Aorta (tissue), 5 donors: ENCODE measurements at regions of chr19 and their contacts with region 1.

Region 1: DNA sequence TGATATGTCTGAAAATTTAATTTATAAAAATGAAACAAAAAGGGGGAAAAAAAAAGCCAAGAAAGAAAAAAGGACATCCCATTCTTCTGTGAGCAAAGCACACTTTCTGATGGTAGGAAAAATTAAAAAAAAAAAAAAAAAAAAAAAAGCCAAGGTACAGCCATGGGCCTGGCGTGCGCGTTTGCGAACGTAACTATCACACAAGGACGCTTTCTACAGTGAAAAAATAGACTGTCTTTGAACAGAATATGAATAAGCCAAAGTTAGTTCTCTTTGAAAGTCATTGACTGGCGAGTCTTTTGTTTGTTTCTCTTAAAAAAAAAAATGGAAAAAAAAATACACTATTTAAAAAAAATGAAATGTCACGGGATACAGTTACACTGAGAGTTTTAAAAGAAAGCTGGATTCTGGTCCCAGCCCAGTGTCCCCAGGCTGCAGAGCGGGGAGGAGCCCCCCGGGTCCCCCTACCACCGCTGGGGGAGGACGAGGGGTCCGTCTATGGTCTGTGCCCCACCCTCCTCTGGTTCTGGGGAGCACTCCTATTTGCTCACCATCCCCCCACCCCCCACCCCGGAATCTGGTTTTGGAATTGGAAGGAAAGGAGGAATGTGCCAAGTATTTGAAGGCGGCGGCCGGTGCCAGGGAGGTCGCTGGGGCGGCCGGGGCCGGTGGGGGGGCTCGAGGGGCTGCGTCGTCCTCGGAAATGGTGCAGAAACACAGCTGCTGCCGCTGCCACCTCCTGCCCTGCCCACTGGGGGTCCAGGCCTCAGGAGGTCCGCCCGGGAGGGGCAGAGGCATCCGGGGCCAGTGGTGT is 134.5 kb downstream of the PTPRS start:
- DNase-seq: no peak
- ATAC-seq: no peak
- H3K4me3 ChIP-seq: no peak overlapping the region
- H3K27ac ChIP-seq: no peak overlapping the region
- H3K4me1 ChIP-seq: no peaks in the 10 kb centered on the region
- H3K27me3 ChIP-seq: no peaks in the 10 kb centered on the region

Region 2: GRCh38 chr19:5091018-5091683 is 115.0 kb before region 1 on chr19:
- intact Hi-C with region 1: no loop called
- DNase-seq: peak in 1 of 2 donors; percentile 64
- ATAC-seq: peak; percentile 44
- H3K4me3 ChIP-seq: no peak overlapping the region
- H3K27ac ChIP-seq: no peak overlapping the region
- H3K4me1 ChIP-seq: no peaks in the 10 kb centered on the region
- H3K27me3 ChIP-seq: no peaks in the 10 kb centered on the region

Region 3: DNA sequence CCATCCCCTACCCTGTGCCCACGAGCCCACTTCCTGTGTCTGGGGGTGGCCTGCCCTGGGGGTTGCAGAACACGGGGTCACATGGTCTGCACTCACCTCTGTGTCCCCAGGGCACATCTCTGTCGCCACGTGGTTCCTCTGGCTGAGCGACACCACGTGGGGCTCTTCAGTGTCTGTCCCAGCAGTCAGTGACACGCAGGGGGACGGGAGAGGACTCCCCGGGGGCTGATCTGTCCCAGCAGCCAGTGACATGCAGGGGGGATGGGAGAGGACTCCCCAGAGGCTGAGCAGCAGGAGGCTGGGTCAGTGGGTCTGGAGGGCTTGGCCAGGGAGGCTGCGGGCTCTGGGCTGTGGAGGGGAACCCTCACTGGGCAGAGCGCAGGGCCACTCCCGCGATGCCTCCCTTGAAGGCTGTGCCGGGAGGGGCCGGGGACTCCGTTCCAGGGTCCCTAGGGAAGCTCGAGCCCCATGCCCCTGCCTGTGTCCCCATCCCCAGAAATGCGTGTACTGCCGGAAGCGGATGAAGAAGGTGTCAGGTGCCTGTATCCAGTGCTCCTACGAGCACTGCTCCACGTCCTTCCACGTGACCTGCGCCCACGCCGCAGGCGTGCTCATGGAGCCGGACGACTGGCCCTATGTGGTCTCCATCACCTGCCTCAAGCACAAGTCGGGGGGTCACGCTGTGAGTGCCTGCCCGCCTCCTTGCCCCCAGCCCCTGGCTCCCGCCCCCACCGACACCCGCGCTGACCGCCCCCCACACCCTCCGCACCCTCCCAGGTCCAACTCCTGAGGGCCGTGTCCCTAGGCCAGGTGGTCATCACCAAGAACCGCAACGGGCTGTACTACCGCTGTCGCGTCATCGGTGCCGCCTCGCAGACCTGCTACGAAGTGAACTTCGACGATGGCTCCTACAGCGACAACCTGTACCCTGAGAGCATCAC is 62.4 kb before region 1 on chr19:
- intact Hi-C with region 1: loop called in 1 of 2 experiments (anchors 2 kb)
- DNase-seq: peak; percentile 44 to 73
- ATAC-seq: no peak
- H3K4me3 ChIP-seq: no peak overlapping the region
- H3K27ac ChIP-seq: no peak overlapping the region
- H3K4me1 ChIP-seq: no peaks in the 10 kb centered on the region
- H3K27me3 ChIP-seq: no peaks in the 10 kb centered on the region